ENCODE measurements at regions of chr2 and their contacts with region 1.

Region 1: GRCh38 chr2:113370478-113371091 is 66.9 kb upstream of the ZNG1B start:
- DNase-seq: no peak
- H3K4me3 ChIP-seq: no peak overlapping the region
- H3K27me3 ChIP-seq: no peaks in the 10 kb centered on the region; the same call in 1 of the 2 replicates
- CTCF ChIP-seq: peak; percentile 60

Region 2: DNA sequence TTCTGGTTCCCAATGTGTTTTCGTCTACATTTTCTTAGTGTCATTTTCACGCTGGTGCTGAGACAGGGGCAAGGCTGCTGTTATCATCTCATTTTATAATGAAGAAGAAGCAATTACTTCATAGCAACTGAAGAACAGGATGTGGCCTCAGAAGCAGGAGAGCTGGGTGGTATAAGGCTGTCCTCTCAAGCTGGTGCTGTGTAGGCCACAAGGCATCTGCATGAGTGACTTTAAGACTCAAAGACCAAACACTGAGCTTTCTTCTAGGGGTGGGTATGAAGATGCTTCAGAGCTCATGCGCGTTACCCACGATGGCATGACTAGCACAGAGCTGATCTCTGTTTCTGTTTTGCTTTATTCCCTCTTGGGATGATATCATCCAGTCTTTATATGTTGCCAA is 385.5 kb before region 1 on chr2:
- CTCF ChIA-PET with region 1: no interaction called
- POLR2A ChIA-PET with region 1: no interaction called
- DNase-seq: no peak
- H3K4me3 ChIP-seq: no peak overlapping the region
- H3K27me3 ChIP-seq: peaks cover 9% of the 10 kb centered on the region
- CTCF ChIP-seq: no peak

Region 3: GRCh38 chr2:113248997-113249770 is 121.4 kb before region 1 on chr2:
- CTCF ChIA-PET with region 1: interaction called, 72 read pairs
- POLR2A ChIA-PET with region 1: no interaction called
- DNase-seq: no peak
- H3K4me3 ChIP-seq: no peak overlapping the region
- H3K27me3 ChIP-seq: no peaks in the 10 kb centered on the region
- CTCF ChIP-seq: peak; percentile 90

Measured in BJ (cell line).